CD8-positive, alpha-beta T cell (primary cell): ENCODE measurements at regions of chr7 and their contacts with region 1.

Region 1: GRCh38 chr7:1503816-1504775 is at the start of gene INTS1:
- DNase-seq: peak; percentile 78 to 94 (median 90)
- ATAC-seq: peak; percentile 93
- H3K4me3 ChIP-seq: peak within 1 kb of the TSS; percentile 68 to 82
- H3K4me3 Mint-ChIP-seq: peak within 1 kb of the TSS; percentile 88
- H3K27ac ChIP-seq: peak within 1 kb of the TSS in 1 of 2 experiments; percentile 51
- H3K27ac Mint-ChIP-seq: peak within 1 kb of the TSS; percentile 76
- H3K4me1 ChIP-seq: peaks cover 48% of the 10 kb centered on the region
- H3K4me1 Mint-ChIP-seq: peaks cover 46% of the 10 kb centered on the region
- H3K27me3 ChIP-seq: peaks cover 0 to 2% of the 10 kb centered on the region in 2 experiments
- H3K27me3 Mint-ChIP-seq: peaks cover 3% of the 10 kb centered on the region
- CTCF ChIP-seq: peak; percentile 95
- total RNA-seq, gene INTS1: 106 to 113 TPM

Region 2: DNA sequence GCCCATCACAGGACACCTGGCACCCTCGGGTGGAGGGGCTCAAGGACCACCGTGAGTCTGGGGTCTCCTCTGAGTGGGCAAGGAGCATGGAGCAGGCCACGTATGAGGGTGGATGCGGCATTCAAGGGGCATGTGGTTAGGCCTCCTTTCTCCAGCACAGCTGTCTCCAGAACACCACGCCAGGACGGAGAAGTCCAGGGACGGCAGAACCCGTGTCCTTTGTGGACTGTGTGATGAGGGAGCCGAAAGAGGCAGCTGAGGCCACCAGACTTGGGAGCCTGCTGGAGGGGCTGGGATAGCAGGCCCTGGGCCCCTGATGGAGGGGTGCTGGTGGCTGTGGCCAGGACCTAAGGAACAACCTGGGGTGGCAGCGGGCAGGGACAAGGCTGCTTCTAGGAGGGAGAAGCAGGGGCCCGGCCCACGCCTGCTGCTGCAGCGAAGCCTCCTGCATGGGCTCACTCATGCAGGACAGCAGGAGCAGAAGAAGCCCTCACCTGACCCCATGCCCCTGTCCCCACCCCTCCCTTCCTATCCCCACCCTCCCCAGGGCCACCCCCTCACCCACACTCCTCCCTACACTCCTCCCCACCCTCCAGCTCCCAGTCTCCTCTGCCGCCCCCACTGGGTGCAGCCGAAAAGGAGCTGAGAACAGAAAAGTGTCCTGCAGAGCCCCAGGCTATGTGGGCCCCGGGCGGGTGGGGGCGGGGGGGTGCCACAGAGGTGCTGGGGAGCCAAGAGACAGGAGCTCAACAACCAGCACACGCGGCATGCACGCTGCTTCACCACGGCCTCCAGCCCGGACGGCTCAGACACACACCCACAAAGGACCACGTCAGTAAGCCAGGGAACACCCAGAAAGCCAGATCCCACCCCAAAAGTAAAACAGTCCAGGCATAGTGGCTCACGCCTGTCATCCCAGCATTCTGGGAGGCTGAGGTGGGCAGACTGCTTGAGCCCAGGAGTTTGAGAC is 373.8 kb before region 1 on chr7:
- CTCF ChIA-PET with region 1: no interaction called
- POLR2A ChIA-PET with region 1: no interaction called
- intact Hi-C with region 1: no loop called
- DNase-seq: no peak
- ATAC-seq: no peak
- H3K4me3 ChIP-seq: no peak overlapping the region
- H3K4me3 Mint-ChIP-seq: no peak overlapping the region
- H3K27ac ChIP-seq: no peak overlapping the region
- H3K27ac Mint-ChIP-seq: no peak overlapping the region
- H3K4me1 ChIP-seq: no peaks in the 10 kb centered on the region
- H3K4me1 Mint-ChIP-seq: peaks cover 2% of the 10 kb centered on the region
- H3K27me3 ChIP-seq: no peaks in the 10 kb centered on the region
- H3K27me3 Mint-ChIP-seq: no peaks in the 10 kb centered on the region
- CTCF ChIP-seq: no peak

Region 3: DNA sequence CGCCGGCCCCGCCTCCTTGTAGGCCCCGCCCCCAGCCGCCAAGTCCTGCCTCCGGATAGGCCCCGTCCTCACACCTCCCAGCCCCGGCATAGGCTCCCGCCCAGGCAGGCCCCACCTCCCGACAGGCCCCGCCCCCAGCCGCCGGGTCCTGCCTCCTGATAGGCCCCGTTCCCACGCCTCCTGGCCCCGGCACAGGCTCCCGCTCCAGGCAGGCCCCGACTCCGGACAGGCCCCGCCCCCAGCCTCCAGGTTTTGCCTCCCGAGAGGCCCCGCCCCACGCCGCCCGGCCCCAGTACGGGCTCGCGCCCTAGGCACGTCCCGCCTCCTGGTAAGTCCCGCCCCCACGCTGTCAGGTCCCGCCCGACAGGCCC is 44.6 kb before region 1 on chr7:
- CTCF ChIA-PET with region 1: no interaction called
- POLR2A ChIA-PET with region 1: no interaction called
- intact Hi-C with region 1: loop called (anchors 1 to 2 kb)
- DNase-seq: peak; percentile 90 to 98 (median 97)
- ATAC-seq: peak; percentile 95
- H3K4me3 ChIP-seq: peak overlapping the region; percentile 65 to 90
- H3K4me3 Mint-ChIP-seq: peak overlapping the region; percentile 77
- H3K27ac ChIP-seq: no peak overlapping the region
- H3K27ac Mint-ChIP-seq: no peak overlapping the region
- H3K4me1 ChIP-seq: peaks cover 24% of the 10 kb centered on the region
- H3K4me1 Mint-ChIP-seq: peaks cover 17% of the 10 kb centered on the region
- H3K27me3 ChIP-seq: no peaks in the 10 kb centered on the region
- H3K27me3 Mint-ChIP-seq: no peaks in the 10 kb centered on the region
- CTCF ChIP-seq: no peak

Region 4: GRCh38 chr7:1532483-1533424 is 28.7 kb after region 1 on chr7:
- CTCF ChIA-PET with region 1: interaction called, 3 read pairs
- POLR2A ChIA-PET with region 1: interaction called, 4 read pairs
- intact Hi-C with region 1: loop called (anchors 1 kb)
- DNase-seq: peak in 8 of 9 experiments; percentile 42 to 75 (median 68)
- ATAC-seq: peak; percentile 48
- H3K4me3 ChIP-seq: peak overlapping the region; percentile 65 to 66
- H3K4me3 Mint-ChIP-seq: peak overlapping the region; percentile 89
- H3K27ac ChIP-seq: peak overlapping the region; percentile 82 to 90
- H3K27ac Mint-ChIP-seq: peak overlapping the region; percentile 99
- H3K4me1 ChIP-seq: peaks cover 33% of the 10 kb centered on the region
- H3K4me1 Mint-ChIP-seq: peaks cover 38% of the 10 kb centered on the region
- H3K27me3 ChIP-seq: no peaks in the 10 kb centered on the region
- H3K27me3 Mint-ChIP-seq: no peaks in the 10 kb centered on the region
- CTCF ChIP-seq: no peak

Region 5: DNA sequence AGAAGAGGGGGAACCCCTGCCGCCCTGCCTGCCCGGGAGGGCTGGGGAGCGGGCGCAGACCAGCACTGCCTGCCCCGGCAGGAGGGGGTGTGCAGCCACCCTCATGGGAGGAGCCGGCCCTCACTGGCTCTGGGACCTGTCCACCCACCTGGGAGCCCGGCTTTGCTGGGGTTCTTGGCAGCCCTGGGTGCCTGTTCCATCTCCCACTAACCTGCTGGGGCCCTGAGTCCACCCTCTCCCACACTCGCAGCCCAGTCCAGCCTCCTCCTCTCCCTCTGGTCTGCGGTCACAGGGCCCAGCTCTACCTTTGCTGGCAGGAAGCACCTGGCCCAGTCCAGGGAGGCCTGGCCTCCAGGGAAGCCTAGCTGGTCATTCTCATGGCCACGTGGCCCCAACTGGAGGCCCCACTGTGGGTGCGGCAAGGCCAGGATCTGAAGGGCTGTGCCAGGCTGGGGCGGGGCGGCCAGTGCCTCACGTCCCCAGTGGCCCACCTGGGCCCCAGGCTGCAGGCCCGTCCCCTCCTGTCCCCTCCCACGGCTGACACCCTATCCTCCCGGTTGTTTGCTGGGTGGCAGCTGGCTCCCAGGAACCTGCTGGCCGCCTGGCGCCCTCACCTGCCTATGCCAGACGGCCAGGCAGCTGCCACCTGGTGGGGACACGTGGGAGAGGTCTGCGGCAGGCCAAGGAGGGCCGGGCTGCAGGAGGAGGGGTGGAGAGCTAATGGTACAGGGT is 51.9 kb after region 1 on chr7 and contains the start of gene TMEM184A:
- CTCF ChIA-PET with region 1: interaction called, 6 read pairs
- POLR2A ChIA-PET with region 1: no interaction called
- intact Hi-C with region 1: loop called in 1 of 2 experiments (anchors 1 kb)
- DNase-seq: peak in 6 of 9 experiments; percentile 49 to 68 (median 59)
- ATAC-seq: peak; percentile 87
- H3K4me3 ChIP-seq: no peak within 1 kb of the TSS
- H3K4me3 Mint-ChIP-seq: no peak within 1 kb of the TSS
- H3K27ac ChIP-seq: no peak within 1 kb of the TSS
- H3K27ac Mint-ChIP-seq: no peak within 1 kb of the TSS
- H3K4me1 ChIP-seq: peaks cover 6% of the 10 kb centered on the region
- H3K4me1 Mint-ChIP-seq: peaks cover 3% of the 10 kb centered on the region
- H3K27me3 ChIP-seq: no peaks in the 10 kb centered on the region
- H3K27me3 Mint-ChIP-seq: no peaks in the 10 kb centered on the region
- CTCF ChIP-seq: peak; percentile 44
- total RNA-seq, gene TMEM184A: not detected

Region 6: GRCh38 chr7:2232766-2233520 is 728.8 kb after region 1 on chr7 and contains the start of gene MAD1L1:
- CTCF ChIA-PET with region 1: no interaction called
- POLR2A ChIA-PET with region 1: no interaction called
- intact Hi-C with region 1: loop called in 1 of 2 experiments (anchors 10 kb)
- DNase-seq: peak; percentile 77 to 93 (median 88)
- ATAC-seq: peak; percentile 93
- H3K4me3 ChIP-seq: peak within 1 kb of the TSS; percentile 63 to 96
- H3K4me3 Mint-ChIP-seq: peak within 1 kb of the TSS; percentile 94
- H3K27ac ChIP-seq: peak within 1 kb of the TSS; percentile 33 to 61
- H3K27ac Mint-ChIP-seq: peak within 1 kb of the TSS; percentile 83
- H3K4me1 ChIP-seq: peaks cover 24% of the 10 kb centered on the region
- H3K4me1 Mint-ChIP-seq: peaks cover 34% of the 10 kb centered on the region
- H3K27me3 ChIP-seq: no peaks in the 10 kb centered on the region
- H3K27me3 Mint-ChIP-seq: no peaks in the 10 kb centered on the region
- CTCF ChIP-seq: no peak
- total RNA-seq, gene MAD1L1: 88.7 to 91.0 TPM